Tibial artery (tissue), 4 donors: ENCODE measurements at regions of chr5 and their contacts with region 1.

Region 1: DNA sequence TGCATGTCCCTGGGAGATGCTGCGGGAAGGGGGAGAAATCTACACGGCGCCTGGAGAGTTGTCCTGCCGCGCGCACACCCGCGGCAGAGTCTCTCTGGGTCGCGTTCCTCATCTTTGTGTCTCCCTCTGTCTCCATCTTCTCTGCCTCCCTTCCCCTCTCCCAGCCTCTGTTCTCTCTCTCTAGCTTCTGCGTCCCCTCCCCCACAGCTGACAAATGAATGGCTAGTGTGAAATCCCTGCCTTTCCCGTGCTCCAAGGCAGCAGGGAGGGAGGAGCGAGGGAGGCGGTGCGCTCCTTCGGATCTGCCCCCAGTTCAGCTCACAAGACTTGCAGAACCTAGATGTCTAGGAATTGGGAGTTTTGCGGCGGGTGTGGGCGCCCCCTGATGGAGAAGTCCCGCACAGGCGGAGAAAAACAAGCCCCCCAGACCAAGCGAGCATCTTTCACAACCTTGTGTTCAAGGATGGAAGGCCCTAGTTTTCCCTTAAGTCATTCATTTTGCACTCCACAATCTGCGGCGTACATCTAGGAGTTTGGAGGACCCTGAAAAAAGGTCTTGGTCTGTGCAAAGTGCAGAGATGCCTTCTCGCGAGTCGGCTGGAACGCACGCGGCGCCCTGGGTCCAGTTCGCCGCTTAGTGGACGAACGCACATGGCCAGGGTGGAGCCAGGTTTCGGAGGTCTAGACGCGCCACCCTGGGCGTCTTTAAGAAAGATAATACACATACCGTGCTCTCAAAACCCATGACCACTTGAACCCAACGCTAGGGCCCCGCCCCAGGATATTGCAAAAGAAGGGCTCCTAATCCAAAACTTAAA is 2.0 kb downstream of the VCAN start:
- DNase-seq: peak; percentile 97 to 98
- H3K4me3 ChIP-seq: peak overlapping the region; percentile 60 to 77
- H3K27ac ChIP-seq: peak overlapping the region; percentile 79 to 86
- H3K4me1 ChIP-seq: peaks cover 0 to 36% (median 16%) of the 10 kb centered on the region in 4 donors
- H3K27me3 ChIP-seq: no peaks in the 10 kb centered on the region
- CTCF ChIP-seq: peak; percentile 86 to 92

Region 2: GRCh38 chr5:82312373-82312856 is 1161.1 kb before region 1 on chr5:
- intact Hi-C with region 1: loop called (anchors 10 kb)
- DNase-seq: peak; percentile 78 to 87
- H3K4me3 ChIP-seq: peak overlapping the region; percentile 13 to 34
- H3K27ac ChIP-seq: peak overlapping the region; percentile 61 to 73
- H3K4me1 ChIP-seq: peaks cover 0 to 24% (median 6%) of the 10 kb centered on the region in 4 donors
- H3K27me3 ChIP-seq: no peaks in the 10 kb centered on the region
- CTCF ChIP-seq: peak; percentile 88 to 91

Region 3: DNA sequence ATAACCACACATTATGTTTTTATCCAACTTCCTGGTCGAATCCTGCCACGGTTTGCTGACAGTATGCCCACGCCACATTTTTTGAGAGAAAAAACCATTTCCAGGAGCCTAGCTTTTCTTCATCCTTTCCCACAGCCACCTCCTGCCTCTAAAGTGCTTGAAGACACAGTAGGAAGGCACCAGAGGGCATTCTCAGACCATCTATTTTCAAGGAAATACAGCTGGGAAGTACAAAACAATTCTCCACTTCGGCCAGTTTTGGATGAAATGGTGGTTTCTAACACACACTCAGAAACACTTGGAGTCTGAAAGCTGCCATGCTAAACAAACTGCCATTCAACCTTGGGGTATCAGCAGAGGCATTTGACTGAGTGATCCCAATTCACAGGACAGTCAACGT is 1109.1 kb before region 1 on chr5:
- intact Hi-C with region 1: loop called (anchors 5 kb)
- DNase-seq: no peak
- H3K4me3 ChIP-seq: no peak overlapping the region
- H3K27ac ChIP-seq: peak overlapping the region; percentile 8 to 47
- H3K4me1 ChIP-seq: peaks cover 0 to 14% (median 5%) of the 10 kb centered on the region in 4 donors
- H3K27me3 ChIP-seq: no peaks in the 10 kb centered on the region
- CTCF ChIP-seq: peak; percentile 55 to 57

Region 4: DNA sequence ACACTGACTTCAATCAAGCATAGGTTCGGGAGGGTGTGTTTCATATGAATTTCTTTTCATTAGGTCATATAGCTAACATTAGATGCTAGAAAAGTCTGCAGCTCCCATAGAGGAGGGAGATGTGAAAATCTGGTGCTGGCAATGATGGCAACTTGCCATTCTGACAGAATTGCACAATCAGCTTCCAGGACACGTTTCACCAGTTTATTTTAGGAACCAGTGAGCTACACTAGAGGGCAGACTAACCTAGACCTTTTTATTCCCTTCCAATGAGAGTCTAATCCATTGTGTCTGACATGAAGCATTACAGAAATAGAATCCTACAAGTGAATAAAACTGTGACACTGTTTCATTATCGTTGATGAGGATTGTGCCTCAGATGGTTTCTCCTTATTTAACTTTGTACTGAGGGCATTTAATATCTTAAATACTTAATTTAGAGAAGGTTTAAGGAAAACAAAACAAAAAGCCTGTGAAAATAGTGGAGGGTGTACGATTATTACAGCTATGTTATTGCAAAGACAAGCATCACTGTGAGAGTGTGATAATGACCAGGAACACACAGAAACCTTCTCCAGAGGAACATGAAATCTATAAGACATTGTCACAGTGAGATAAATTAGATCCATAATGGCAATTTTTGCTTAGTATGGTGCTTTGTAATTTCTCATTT is 832.1 kb before region 1 on chr5:
- intact Hi-C with region 1: loop called (anchors 5 kb)
- DNase-seq: peak; percentile 83 to 88
- H3K4me3 ChIP-seq: no peak overlapping the region
- H3K27ac ChIP-seq: peak overlapping the region; percentile 64 to 68
- H3K4me1 ChIP-seq: peaks cover 0 to 29% (median 16%) of the 10 kb centered on the region in 4 donors
- H3K27me3 ChIP-seq: no peaks in the 10 kb centered on the region
- CTCF ChIP-seq: peak; percentile 75 to 82

Region 5: GRCh38 chr5:83076742-83077661 is 396.6 kb before region 1 on chr5 and contains the starts of genes TMEM167A and XRCC4:
- intact Hi-C with region 1: loop called (anchors 5 kb)
- DNase-seq: peak; percentile 97 to 98
- H3K4me3 ChIP-seq: peak within 1 kb of the TSS; percentile 86 to 95
- H3K27ac ChIP-seq: peak within 1 kb of the TSS; percentile 82 to 89
- H3K4me1 ChIP-seq: peaks cover 0 to 52% (median 22%) of the 10 kb centered on the region in 4 donors
- H3K27me3 ChIP-seq: no peaks in the 10 kb centered on the region
- CTCF ChIP-seq: no peak